Naive thymus-derived CD4-positive, alpha-beta T cell (primary cell): ENCODE measurements at regions of chr11 and their contacts with region 1.

Region 1: DNA sequence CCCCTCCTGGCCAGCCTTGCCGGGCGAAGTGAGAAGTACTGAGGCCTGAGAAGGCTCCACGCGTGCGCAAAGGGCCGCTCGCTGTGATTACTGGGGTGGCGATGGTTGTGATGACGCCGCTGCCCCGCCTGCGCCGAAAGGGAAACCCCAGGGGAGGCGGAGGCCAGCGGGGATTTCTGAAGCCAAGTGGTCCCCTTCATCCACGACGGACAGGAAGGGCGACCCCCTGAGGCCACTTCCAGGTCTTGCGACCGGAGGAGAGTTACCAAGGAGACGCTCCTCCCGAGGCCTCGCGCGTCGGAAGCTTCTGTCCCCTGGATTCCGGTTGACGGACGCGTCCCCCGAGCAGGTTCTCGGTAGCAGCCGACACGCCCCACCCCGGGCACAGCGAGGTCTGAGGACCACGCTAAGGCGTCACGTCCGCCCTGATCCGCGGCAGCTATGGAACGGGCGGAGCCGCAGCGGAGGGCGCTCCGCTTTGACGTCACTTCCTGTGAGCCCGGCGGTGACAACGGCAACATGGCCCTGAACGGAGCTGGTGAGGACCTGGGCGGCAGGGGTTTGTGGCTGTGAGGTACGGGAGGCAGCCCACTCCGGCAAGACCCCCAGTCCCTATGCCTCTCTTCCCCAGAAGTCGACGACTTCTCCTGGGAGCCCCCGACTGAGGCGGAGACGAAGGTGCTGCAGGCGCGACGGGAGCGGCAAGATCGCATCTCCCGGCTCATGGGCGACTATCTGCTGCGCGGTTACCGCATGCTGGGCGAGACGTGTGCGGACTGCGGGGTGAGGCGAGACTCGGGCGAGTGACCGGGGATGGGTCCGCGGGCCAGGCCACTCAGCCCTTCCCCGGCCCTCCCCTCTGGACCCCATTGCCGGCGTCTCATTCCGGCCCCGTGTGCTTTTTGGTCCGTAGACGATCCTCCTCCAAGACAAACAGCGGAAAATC is at the start of gene ZNRD2:
- DNase-seq: peak; percentile 94 to 99 (median 98)
- ATAC-seq: peak; percentile 82
- H3K4me3 ChIP-seq: peak within 1 kb of the TSS; percentile 96
- H3K4me3 Mint-ChIP-seq: peak within 1 kb of the TSS; percentile 91 to 100 (median 97)
- H3K27ac ChIP-seq: peak within 1 kb of the TSS; percentile 96
- H3K27ac Mint-ChIP-seq: peak within 1 kb of the TSS; percentile 89 to 100 (median 99)
- H3K4me1 ChIP-seq: peaks cover 63 to 64% of the 10 kb centered on the region in 2 donors
- H3K4me1 Mint-ChIP-seq: peaks cover 49 to 77% (median 69%) of the 10 kb centered on the region in 7 donors
- H3K27me3 ChIP-seq: no peaks in the 10 kb centered on the region
- H3K27me3 Mint-ChIP-seq: no peaks in the 10 kb centered on the region
- total RNA-seq, gene ZNRD2: 29.1 to 40.9 (median 32.9) TPM

Region 2: GRCh38 chr11:65117216-65118096 is 452.8 kb before region 1 on chr11 and contains the start of gene ZNHIT2:
- CTCF ChIA-PET with region 1: no interaction called
- POLR2A ChIA-PET with region 1: no interaction called
- intact Hi-C with region 1: loop called in 1 of 2 experiments (anchors 1 kb)
- DNase-seq: peak; percentile 94 to 100 (median 100)
- ATAC-seq: peak; percentile 85
- H3K4me3 ChIP-seq: peak within 1 kb of the TSS; percentile 92
- H3K4me3 Mint-ChIP-seq: peak within 1 kb of the TSS; percentile 91 to 95 (median 92)
- H3K27ac ChIP-seq: peak within 1 kb of the TSS; percentile 99
- H3K27ac Mint-ChIP-seq: peak within 1 kb of the TSS; percentile 86 to 100 (median 96)
- H3K4me1 ChIP-seq: peaks cover 28 to 37% of the 10 kb centered on the region in 2 donors
- H3K4me1 Mint-ChIP-seq: peaks cover 20 to 77% (median 53%) of the 10 kb centered on the region in 7 donors
- H3K27me3 ChIP-seq: no peaks in the 10 kb centered on the region
- H3K27me3 Mint-ChIP-seq: no peaks in the 10 kb centered on the region
- total RNA-seq, gene ZNHIT2: 9.9 to 18.2 (median 11.3) TPM

Region 3: DNA sequence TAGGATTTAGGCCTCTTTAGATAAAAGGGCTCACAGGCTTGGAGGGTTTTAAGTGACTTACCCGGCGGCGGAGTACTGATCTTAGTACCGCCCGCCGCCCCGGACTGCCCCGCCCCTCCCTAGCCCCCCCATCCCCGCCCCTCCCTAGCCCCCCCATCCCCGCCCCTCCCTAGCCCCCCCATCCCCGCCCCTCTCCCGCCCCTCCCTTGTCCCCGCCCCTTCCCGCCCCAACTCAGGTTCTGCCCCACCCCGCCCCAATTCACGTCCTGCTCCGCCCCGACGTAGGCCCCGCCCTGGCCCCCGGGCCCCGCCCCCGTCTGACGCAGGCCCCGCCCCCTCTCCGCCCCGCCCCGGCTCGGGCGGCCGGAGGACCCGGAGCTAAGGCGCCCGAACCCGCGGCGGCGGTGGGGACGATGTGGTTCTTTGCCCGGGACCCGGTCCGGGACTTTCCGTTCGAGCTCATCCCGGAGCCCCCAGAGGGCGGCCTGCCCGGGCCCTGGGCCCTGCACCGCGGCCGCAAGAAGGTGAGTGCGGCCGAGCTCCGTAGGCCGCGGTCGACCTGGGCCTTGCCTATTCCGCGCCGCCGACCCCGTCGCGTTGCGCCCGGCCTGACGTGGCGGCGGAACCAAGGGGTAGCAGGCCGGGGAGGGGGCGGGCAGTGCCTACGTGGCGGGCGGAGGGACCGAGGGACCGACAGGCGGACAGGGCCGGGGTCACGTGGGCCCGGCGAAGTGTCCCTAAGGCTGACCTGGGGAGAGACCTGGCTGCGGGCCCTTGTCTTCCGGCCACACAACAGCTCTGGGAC is 45.3 kb before region 1 on chr11 and contains the start of gene SCYL1:
- CTCF ChIA-PET with region 1: interaction called, 3 read pairs
- POLR2A ChIA-PET with region 1: interaction called, 11 read pairs
- intact Hi-C with region 1: loop called in 1 of 2 experiments (anchors 1 kb)
- DNase-seq: peak; percentile 58 to 86 (median 77)
- ATAC-seq: peak; percentile 97
- H3K4me3 ChIP-seq: peak within 1 kb of the TSS; percentile 79
- H3K4me3 Mint-ChIP-seq: peak within 1 kb of the TSS; percentile 86 to 96 (median 90)
- H3K27ac ChIP-seq: peak within 1 kb of the TSS; percentile 96
- H3K27ac Mint-ChIP-seq: peak within 1 kb of the TSS; percentile 89 to 98 (median 95)
- H3K4me1 ChIP-seq: peaks cover 31 to 40% of the 10 kb centered on the region in 2 donors
- H3K4me1 Mint-ChIP-seq: peaks cover 32 to 66% (median 54%) of the 10 kb centered on the region in 7 donors
- H3K27me3 ChIP-seq: no peaks in the 10 kb centered on the region
- H3K27me3 Mint-ChIP-seq: no peaks in the 10 kb centered on the region
- total RNA-seq, gene SCYL1: 63.2 to 79.8 (median 70.4) TPM

Region 4: DNA sequence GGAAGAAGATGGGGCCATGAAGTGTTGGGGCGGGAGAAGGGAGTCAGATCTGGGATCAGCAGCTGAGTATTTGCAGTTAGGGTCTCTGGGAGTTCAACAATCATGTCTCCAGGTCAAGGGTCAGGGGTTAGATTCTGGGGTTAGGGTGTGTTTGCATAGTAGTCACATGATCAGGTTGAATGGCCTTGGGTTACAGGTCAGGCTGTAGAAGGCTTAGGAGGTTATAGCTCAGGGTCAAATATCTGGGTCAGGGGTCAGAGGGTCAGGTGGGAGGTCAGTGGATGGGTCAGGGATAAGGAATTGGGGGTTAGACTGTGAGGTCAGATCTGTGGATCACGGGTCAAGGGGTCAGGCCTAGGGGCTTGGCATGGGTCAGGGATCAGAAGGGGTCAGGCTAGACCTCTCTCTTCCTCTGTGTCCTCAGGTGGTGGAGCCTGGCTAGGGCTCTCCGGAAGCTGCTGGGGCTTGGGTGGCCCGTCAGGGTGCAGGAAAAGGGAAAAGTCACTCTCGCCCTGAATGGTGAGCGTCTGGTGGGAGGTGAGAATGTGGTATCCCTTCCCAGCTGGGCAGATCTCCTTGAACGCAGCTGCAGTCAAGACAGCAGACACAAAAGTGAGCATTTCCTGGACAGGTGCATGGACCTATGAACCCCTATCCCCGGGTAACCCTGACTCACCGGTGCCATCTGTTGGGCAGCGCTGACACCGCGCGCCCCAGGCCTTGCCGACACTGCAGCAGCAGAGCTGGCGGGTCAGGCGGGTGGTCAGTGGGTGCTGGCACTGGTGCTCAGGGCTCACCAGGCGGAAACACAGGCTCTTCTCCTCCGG is 18.5 kb before region 1 on chr11:
- CTCF ChIA-PET with region 1: interaction called, 18 read pairs
- POLR2A ChIA-PET with region 1: interaction called, 186 read pairs
- intact Hi-C with region 1: loop called (anchors 1 kb)
- DNase-seq: peak in 6 of 9 donors; percentile 51 to 62 (median 56)
- ATAC-seq: peak; percentile 53
- H3K4me3 ChIP-seq: no peak overlapping the region
- H3K4me3 Mint-ChIP-seq: peak overlapping the region; percentile 18 to 98 (median 74)
- H3K27ac ChIP-seq: peak overlapping the region; percentile 31
- H3K27ac Mint-ChIP-seq: peak overlapping the region; percentile 71 to 93 (median 87)
- H3K4me1 ChIP-seq: peaks cover 35 to 78% of the 10 kb centered on the region in 2 donors
- H3K4me1 Mint-ChIP-seq: peaks cover 50 to 86% (median 74%) of the 10 kb centered on the region in 7 donors
- H3K27me3 ChIP-seq: no peaks in the 10 kb centered on the region
- H3K27me3 Mint-ChIP-seq: no peaks in the 10 kb centered on the region

Region 5: DNA sequence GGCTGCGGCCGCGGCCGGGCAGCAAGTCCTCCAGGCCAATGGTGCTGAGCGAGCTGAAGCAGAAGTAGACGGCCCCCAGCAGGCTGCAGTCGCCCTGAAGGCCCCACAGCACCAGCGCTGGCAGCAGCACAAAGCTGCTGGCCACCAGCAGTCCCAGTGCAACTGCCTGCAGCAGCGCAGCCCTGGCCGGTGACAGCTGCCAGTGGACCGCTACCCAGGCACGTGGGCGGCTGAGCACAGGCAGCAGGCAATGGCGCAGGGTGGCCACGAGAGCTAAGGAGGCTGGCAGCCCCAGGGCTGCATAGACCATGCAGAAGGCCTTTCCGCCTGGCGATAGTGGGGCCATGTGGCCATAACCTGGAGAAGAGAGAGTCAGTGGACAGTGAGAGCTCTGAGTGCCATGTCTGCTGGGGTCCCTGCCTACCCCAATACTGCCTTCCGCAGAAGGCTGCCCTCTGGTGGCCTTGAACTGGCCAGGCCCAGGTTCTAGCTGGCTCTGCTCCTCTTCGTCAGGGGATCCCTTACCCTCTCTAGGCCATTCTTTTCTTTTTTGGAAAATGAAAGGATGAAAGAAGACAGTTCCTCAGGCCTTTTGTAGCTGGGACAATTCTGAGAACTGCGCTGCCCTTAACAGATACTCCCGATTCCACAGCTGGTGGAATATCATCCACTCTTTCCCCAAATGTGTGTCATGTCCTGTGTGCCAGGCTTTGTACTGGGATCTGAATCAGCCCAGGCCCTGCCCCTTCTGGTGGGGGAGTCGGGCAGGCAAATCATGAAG is 23.5 kb after region 1 on chr11:
- CTCF ChIA-PET with region 1: interaction called, 36 read pairs
- POLR2A ChIA-PET with region 1: interaction called, 61 read pairs
- intact Hi-C with region 1: loop called (anchors 1 kb)
- DNase-seq: peak in 2 of 9 donors; percentile 35 to 42
- ATAC-seq: peak; percentile 67
- H3K4me3 ChIP-seq: no peak overlapping the region
- H3K4me3 Mint-ChIP-seq: peak overlapping the region in 1 of 10 donors; percentile 9
- H3K27ac ChIP-seq: no peak overlapping the region
- H3K27ac Mint-ChIP-seq: peak overlapping the region in 4 of 9 donors; percentile 25 to 69 (median 40)
- H3K4me1 ChIP-seq: peaks cover 9 to 15% of the 10 kb centered on the region in 2 donors
- H3K4me1 Mint-ChIP-seq: peaks cover 4 to 26% (median 23%) of the 10 kb centered on the region in 7 donors
- H3K27me3 ChIP-seq: no peaks in the 10 kb centered on the region
- H3K27me3 Mint-ChIP-seq: no peaks in the 10 kb centered on the region

Region 6: GRCh38 chr11:65662799-65663638 is 92.8 kb after region 1 on chr11 and contains the start of gene RELA:
- CTCF ChIA-PET with region 1: interaction called, 3 read pairs
- POLR2A ChIA-PET with region 1: interaction called, 7 read pairs
- intact Hi-C with region 1: loop called in 1 of 2 experiments (anchors 1 kb)
- DNase-seq: peak; percentile 84 to 92 (median 89)
- ATAC-seq: peak; percentile 92
- H3K4me3 ChIP-seq: peak within 1 kb of the TSS; percentile 85
- H3K4me3 Mint-ChIP-seq: peak within 1 kb of the TSS; percentile 86 to 93 (median 90)
- H3K27ac ChIP-seq: peak within 1 kb of the TSS; percentile 99
- H3K27ac Mint-ChIP-seq: peak within 1 kb of the TSS; percentile 86 to 95 (median 92)
- H3K4me1 ChIP-seq: peaks cover 20 to 33% of the 10 kb centered on the region in 2 donors
- H3K4me1 Mint-ChIP-seq: peaks cover 10 to 43% (median 31%) of the 10 kb centered on the region in 7 donors
- H3K27me3 ChIP-seq: no peaks in the 10 kb centered on the region
- H3K27me3 Mint-ChIP-seq: no peaks in the 10 kb centered on the region
- total RNA-seq, gene RELA: 106 to 303 (median 165) TPM

Region 7: DNA sequence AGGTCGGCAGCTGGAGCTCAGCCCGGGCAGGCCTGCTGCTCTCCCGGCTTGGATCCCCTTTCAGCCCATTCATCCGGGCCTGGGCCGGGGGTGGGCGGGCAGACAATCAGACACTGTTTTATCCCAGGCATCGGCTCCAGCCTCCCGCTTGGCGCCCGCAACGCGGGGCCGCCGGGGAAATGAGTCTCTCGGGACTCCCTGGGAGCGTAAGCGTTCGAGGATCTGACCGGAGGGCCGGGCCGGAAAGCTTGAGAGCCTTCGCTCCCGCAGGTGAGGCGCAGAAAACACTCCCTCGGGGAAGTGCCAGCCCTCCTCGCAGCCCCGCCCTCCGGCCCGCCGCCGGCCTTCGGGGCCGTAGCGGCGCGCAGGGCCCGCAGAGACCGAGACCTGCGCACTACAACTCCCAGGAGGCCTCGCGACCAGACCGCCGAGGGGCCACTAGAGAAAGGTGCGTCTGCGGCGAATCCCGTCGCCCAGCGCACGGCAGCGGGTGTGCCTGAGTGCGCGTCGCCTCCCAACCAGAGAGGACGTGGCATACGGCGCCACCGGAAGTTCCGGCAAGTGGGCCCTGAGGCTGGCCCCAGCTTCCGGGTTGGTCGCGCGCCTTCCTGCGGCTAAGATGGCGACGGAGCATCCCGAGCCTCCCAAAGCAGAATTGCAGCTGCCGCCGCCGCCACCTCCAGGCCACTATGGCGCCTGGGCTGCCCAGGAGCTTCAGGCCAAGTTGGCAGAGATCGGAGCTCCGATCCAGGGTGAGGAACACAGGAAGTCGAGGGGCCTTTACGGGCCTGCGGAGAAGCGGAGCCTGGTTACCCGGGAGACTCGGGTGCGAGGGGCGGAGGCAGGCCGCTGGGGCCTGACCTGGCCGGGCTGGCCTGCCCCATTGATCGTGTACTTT is 481.8 kb after region 1 on chr11 and contains the start of gene SF3B2:
- CTCF ChIA-PET with region 1: no interaction called
- POLR2A ChIA-PET with region 1: no interaction called
- intact Hi-C with region 1: loop called in 1 of 2 experiments (anchors 1 kb)
- DNase-seq: peak; percentile 81 to 94 (median 93)
- ATAC-seq: peak; percentile 99
- H3K4me3 ChIP-seq: peak within 1 kb of the TSS; percentile 88
- H3K4me3 Mint-ChIP-seq: peak within 1 kb of the TSS; percentile 95 to 100 (median 98)
- H3K27ac ChIP-seq: peak within 1 kb of the TSS; percentile 93
- H3K27ac Mint-ChIP-seq: peak within 1 kb of the TSS; percentile 95 to 99 (median 98)
- H3K4me1 ChIP-seq: peaks cover 14 to 18% of the 10 kb centered on the region in 2 donors
- H3K4me1 Mint-ChIP-seq: peaks cover 17 to 44% (median 38%) of the 10 kb centered on the region in 7 donors
- H3K27me3 ChIP-seq: no peaks in the 10 kb centered on the region
- H3K27me3 Mint-ChIP-seq: peaks cover 0 to 9% (median 0%) of the 10 kb centered on the region in 5 donors
- total RNA-seq, gene SF3B2: 163 to 248 (median 206) TPM

Region 8: GRCh38 chr11:66762088-66762487 is 1191.8 kb after region 1 on chr11:
- CTCF ChIA-PET with region 1: no interaction called
- POLR2A ChIA-PET with region 1: no interaction called
- intact Hi-C with region 1: no loop called
- DNase-seq: no peak
- ATAC-seq: no peak
- H3K4me3 ChIP-seq: no peak overlapping the region
- H3K4me3 Mint-ChIP-seq: no peak overlapping the region
- H3K27ac ChIP-seq: no peak overlapping the region
- H3K27ac Mint-ChIP-seq: no peak overlapping the region
- H3K4me1 ChIP-seq: no peaks in the 10 kb centered on the region
- H3K4me1 Mint-ChIP-seq: no peaks in the 10 kb centered on the region
- H3K27me3 ChIP-seq: no peaks in the 10 kb centered on the region
- H3K27me3 Mint-ChIP-seq: no peaks in the 10 kb centered on the region